Activated CD4-positive, alpha-beta T cell treated with anti-CD3 and anti-CD28 coated beads, Interleukin-2, amount 10 ng/mL, durations not matched to agents 24 days and 14 days (primary cell): ENCODE measurements at regions of chr17 and their contacts with region 1.

Region 1: GRCh38 chr17:57486873-57487301 is 230.6 kb downstream of the MSI2 start:
- DNase-seq: no peak
- H3K4me3 Mint-ChIP-seq: no peak overlapping the region
- H3K27ac Mint-ChIP-seq: peak overlapping the region; percentile 31
- H3K4me1 Mint-ChIP-seq: peaks cover 31% of the 10 kb centered on the region
- H3K27me3 Mint-ChIP-seq: no peaks in the 10 kb centered on the region

Region 2: DNA sequence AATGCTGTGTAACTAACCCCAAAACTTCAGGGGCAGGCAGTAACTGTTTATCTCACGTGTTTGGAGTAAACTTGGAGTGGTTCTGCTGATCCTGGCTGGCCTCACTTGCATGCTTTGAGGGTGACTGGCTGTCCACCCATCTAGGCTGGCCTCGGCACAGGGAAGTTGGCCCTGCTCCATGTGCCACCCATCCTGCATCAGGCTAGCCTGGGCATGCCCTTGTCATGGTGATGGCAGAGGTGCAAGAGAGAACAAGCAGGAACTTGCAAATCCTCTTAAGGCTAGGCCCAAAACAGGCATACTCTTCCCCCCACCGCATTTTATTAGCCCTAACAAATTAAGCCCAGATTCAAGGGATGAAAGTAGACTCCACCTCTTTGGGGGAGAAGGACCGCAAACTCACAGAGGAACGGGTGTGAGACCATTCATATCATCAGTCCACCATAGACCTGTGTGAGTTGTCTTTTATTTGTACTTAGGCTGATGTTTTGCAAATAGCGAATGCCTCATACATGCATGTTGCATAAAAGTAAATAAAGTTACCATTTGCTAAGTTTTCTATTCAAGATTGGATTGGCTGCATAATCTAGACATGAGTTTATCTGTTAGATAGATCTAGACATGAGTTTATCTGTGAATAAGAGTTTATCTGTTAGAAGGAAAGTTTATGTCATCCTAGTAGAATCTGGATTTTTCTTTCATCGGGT is 37.2 kb after region 1 on chr17:
- intact Hi-C with region 1: loop called (anchors 5 kb)
- DNase-seq: no peak
- H3K4me3 Mint-ChIP-seq: no peak overlapping the region
- H3K27ac Mint-ChIP-seq: no peak overlapping the region
- H3K4me1 Mint-ChIP-seq: peaks cover 12% of the 10 kb centered on the region
- H3K27me3 Mint-ChIP-seq: no peaks in the 10 kb centered on the region